Psoas muscle (tissue), 8 donors: ENCODE measurements at regions of chr6 and their contacts with region 1.

Region 1: DNA sequence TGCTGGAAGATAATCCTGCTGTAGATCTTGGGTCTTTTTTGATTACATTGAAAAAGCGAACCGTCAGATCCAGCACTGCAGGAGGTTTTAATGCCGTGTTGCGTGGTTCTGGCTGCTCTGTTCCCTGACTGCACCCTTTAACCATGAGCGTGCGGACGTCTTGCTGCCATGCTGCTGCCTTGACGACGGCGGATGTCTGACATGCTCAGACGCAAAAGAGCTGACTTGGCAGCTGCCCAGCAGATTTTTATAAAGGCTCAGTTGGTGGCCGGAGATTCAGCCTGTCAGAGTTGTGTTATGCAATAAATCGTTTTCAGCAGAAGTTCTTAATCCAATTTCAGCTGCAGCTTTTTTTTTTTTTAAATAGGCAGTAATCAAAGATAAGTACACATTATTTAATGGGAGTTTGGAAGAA is 119.4 kb downstream of the JARID2 start:
- DNase-seq: peak; percentile 80 to 91
- ATAC-seq: peak; percentile 83 to 85 (median 84)
- H3K4me3 ChIP-seq: peak overlapping the region; percentile 41
- H3K27ac ChIP-seq: peak overlapping the region; percentile 82
- H3K4me1 ChIP-seq: peaks cover 75% of the 10 kb centered on the region
- H3K27me3 ChIP-seq: no peaks in the 10 kb centered on the region
- CTCF ChIP-seq: no peak

Region 2: DNA sequence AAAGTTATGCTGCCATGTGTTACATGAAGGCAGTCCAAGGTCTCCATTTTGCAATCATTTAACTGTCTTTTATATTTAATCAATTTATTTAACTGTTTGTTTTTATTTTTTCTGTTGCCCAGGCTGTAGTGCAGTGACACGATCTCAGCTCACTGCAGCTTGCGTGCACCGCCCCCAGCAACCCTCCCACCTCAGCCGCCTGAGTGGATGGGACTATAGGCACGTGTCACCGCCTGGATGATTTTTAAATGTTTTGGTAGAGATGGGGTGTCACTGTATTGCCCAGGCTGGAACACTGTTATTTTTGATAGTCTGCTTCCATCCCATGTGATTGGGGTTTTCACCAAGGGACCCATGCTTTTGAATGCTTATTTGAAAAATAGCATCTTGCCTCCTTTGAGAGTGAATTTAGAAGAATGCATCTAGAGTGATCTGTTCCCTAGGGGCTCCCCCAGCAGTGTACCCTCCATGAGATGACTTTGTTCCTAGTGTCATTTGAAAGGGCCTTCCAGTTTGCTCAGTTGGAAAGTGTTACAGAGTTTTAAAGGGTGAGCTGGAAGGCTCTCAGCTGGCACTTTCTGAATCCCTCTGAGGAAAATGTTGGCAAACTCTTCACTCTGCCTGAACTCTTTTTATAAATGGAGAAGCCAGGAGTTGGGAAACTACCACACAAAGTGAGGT is 23.9 kb after region 1 on chr6:
- intact Hi-C with region 1: no loop called
- DNase-seq: no peak
- ATAC-seq: peak; percentile 38 to 77 (median 50)
- H3K4me3 ChIP-seq: no peak overlapping the region
- H3K27ac ChIP-seq: peak overlapping the region; percentile 38
- H3K4me1 ChIP-seq: peaks cover 70% of the 10 kb centered on the region
- H3K27me3 ChIP-seq: no peaks in the 10 kb centered on the region
- CTCF ChIP-seq: no peak

Region 3: DNA sequence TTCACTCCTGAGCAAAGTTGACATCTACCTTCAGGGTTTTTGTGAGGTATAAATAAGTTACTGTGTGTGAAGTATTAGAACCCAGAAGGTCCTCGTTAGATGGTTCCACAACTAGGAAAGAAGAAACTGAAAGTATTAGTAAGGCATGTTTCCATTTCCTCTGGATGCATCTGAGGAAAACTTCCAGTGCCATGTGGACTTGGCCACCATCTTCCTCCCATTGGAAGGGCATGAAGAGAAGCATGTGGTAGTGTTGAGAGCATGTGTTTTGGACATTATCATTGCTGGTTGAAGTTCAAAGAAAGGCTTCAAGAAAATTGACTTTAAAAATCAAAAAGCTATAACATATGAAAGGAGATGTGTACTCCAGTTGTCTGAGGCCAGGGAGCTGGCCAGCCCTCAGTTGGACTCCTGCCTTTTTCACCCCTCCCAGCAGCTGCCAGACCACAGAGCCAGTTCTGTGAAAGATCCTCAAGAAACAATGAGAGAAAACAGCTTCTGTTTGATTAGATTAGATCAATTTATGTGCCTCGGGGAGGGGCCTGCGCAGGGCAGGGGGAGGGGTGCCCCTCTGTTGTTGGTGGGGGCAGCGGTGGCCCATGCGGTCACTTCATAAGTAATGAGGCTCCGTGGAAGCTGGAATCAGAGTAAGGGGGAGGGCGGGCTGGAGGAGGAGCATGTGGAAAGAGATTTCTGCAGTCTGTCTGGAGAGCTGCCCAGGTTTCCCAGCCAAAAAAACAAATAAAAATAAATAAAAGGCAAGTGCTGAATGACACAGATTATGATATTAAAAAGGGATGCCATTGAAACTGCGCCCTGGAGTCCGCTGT is 34.6 kb after region 1 on chr6:
- intact Hi-C with region 1: loop called in 1 of 2 experiments (anchors 5 kb)
- DNase-seq: peak; percentile 72 to 85
- ATAC-seq: peak; percentile 76 to 81 (median 77)
- H3K4me3 ChIP-seq: peak overlapping the region; percentile 66
- H3K27ac ChIP-seq: peak overlapping the region; percentile 89
- H3K4me1 ChIP-seq: peaks cover 72% of the 10 kb centered on the region
- H3K27me3 ChIP-seq: no peaks in the 10 kb centered on the region
- CTCF ChIP-seq: no peak

Region 4: DNA sequence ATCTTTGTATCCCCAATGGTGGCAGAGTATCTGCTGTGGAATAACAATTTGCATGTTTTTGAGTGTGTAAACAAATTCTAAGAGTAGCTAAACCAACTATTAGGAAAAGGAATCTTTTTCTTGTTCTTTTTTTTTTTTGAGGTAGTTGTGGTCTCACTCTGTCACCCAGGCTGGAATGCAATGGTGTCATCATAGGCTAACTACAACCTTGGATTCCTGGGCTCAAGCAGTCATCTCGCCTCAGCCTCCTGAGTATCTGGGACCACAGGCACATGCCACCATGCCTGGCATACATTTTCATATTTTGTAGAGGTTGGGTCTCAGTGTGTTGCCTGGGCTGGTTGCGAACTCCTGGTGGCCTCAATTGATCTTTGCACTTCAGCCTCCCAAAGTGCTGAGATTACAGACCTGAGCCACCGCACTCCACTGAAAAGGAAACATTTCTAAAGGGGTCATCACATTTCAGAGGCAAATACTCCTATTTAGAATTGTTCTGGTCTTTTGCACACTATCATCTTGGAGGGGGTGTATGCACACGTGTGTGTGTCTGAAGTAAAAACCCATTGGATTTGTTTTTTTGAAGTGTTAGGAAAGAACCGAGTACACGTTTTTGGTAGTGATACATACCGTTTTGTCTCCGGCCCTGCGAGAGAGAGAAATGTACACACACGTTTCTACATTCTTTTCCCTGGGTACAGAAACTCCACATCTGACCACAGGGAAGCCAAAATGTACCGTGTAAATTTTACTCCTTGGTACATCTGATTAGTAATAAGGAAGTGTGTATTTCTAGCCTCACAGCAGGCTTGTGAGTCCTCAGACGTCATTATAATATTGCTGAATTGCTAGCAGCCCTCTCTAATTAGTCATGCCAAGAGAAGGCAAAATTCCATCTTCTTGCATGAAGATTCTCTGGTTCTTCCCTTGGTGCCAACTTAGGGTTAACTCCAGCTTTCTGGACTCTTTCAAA is 64.1 kb after region 1 on chr6:
- intact Hi-C with region 1: loop called in 1 of 2 experiments (anchors 10 kb)
- DNase-seq: no peak
- ATAC-seq: peak in 2 of 4 donors; percentile 21 to 23
- H3K4me3 ChIP-seq: no peak overlapping the region
- H3K27ac ChIP-seq: peak overlapping the region; percentile 89
- H3K4me1 ChIP-seq: peaks cover 59% of the 10 kb centered on the region
- H3K27me3 ChIP-seq: no peaks in the 10 kb centered on the region
- CTCF ChIP-seq: no peak